AG04450 (cell line): ENCODE measurements at regions of chr14 and their contacts with region 1.

Region 1: DNA sequence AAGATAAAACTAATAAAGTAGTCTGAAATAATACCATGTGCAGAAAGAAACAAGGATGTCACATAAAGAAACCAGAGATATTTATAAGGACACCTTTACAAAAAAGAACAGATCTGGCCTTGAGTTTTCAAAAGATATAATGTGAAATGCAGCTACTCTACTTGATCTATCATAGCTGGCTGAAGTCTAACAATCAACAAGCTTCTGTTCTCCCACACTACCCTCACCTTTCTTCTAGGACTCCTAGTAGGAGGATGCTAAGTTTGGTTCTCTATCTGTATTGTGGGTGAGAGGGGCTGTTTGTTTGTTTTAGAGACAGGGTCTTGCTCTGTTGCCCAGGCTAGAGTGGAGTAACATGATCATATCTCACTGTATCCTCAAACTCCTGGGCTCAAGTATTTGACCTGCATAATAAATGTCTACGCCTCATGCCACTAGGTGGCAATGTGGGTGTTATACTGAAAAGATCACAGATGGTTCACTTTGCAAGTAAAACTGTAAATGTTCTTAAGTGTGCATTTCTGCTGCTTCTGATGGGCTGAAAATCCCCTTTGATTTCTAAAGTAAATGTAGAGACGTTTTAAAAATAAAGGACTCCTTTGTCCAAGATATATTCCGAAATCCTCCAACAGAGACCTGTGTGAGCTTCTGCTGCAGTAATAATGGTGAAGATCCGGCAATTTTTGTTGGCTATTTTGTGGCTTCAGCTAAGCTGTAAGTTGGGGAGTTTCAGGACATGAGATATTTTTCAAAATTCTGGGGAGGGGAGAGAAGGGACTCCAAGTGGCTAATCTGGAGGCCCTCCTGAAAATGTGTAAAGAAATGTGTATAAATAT is 269.3 kb downstream of the DAD1 start:
- DNase-seq: no peak
- H3K4me3 ChIP-seq: no peak overlapping the region
- H3K27ac ChIP-seq: no peak overlapping the region
- H3K27me3 ChIP-seq: peaks cover 13% of the 10 kb centered on the region
- CTCF ChIP-seq: peak; percentile 74

Region 2: DNA sequence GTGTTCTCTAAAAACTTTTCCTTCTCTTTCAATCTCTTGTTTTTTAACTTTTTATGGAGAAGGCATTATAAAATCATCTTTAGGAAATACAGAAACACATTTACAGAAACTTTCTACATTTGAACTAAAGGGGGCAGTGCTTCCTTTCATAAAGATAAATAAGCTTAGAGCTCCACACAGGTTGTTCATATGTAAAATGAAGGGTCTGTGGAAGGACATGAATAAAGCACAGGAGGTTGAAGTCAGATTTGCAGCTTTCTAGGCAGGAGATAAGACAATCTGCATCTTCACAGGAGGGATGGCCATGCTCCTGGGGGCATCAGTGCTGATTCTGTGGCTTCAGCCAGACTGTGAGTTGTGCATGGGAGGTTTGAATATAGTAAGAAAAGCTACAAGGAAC is 156.7 kb before region 1 on chr14:
- CTCF ChIA-PET with region 1: interaction called, 16 read pairs
- POLR2A ChIA-PET with region 1: no interaction called
- DNase-seq: no peak
- H3K4me3 ChIP-seq: no peak overlapping the region
- H3K27ac ChIP-seq: no peak overlapping the region
- H3K27me3 ChIP-seq: peaks cover 2% of the 10 kb centered on the region
- CTCF ChIP-seq: peak; percentile 60

Region 3: DNA sequence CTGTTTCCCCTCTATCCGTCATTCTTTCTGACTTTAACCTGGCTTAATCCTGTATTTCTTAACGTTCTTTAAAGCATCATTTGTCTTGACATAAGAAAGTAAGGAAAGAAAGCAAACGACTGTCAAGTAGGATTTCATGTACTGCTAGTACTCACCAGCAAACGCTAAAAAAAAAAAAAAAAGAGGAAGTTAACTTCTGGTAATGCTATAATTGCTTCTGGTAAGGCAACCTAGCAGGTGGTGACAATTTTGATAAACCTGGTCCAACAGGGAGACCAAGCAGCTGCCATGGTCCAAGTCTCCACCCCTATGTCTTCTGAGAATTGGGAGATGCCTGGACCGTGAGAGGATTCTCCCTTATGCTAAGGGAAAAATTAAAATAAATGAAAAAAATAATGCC is 37.3 kb before region 1 on chr14:
- CTCF ChIA-PET with region 1: interaction called, 12 read pairs
- POLR2A ChIA-PET with region 1: no interaction called
- DNase-seq: no peak
- H3K4me3 ChIP-seq: no peak overlapping the region
- H3K27ac ChIP-seq: no peak overlapping the region
- H3K27me3 ChIP-seq: no peaks in the 10 kb centered on the region
- CTCF ChIP-seq: no peak

Region 4: DNA sequence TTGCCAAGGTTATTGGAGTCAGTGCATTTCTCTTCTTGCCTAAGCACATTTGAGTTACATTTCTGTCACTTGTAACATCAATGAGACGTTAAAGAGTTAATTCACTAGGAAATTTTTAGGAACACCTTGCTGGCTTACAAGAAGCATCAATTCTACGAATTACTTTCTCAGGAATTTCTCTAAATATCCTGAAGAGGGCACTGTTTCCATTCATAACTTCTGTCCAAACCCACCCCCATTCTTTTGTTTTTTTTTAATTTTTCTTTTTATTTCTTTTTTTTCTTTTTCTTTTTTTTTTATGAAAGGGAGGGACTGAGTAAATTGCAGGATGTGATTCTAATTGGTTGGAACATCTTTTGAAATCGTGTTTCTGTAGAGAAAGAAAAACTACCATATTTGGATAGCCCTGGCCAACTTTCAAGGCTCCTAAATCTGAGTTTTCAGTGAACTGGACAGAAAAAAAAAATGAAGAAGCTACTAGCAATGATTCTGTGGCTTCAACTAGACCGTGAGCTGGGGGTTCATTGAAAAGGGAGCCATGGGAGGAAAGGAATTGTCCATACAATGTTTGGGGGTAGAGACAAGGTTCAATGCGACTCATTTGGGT is 16.1 kb before region 1 on chr14:
- CTCF ChIA-PET with region 1: interaction called, 13 read pairs
- POLR2A ChIA-PET with region 1: no interaction called
- DNase-seq: no peak
- H3K4me3 ChIP-seq: no peak overlapping the region
- H3K27ac ChIP-seq: no peak overlapping the region
- H3K27me3 ChIP-seq: no peaks in the 10 kb centered on the region
- CTCF ChIP-seq: peak; percentile 59

Region 5: GRCh38 chr14:22375321-22375930 is 55.7 kb after region 1 on chr14:
- CTCF ChIA-PET with region 1: interaction called, 124 read pairs
- POLR2A ChIA-PET with region 1: no interaction called
- DNase-seq: peak; percentile 39
- H3K4me3 ChIP-seq: no peak overlapping the region
- H3K27ac ChIP-seq: no peak overlapping the region
- H3K27me3 ChIP-seq: peaks cover 15% of the 10 kb centered on the region
- CTCF ChIP-seq: peak; percentile 74

Region 6: DNA sequence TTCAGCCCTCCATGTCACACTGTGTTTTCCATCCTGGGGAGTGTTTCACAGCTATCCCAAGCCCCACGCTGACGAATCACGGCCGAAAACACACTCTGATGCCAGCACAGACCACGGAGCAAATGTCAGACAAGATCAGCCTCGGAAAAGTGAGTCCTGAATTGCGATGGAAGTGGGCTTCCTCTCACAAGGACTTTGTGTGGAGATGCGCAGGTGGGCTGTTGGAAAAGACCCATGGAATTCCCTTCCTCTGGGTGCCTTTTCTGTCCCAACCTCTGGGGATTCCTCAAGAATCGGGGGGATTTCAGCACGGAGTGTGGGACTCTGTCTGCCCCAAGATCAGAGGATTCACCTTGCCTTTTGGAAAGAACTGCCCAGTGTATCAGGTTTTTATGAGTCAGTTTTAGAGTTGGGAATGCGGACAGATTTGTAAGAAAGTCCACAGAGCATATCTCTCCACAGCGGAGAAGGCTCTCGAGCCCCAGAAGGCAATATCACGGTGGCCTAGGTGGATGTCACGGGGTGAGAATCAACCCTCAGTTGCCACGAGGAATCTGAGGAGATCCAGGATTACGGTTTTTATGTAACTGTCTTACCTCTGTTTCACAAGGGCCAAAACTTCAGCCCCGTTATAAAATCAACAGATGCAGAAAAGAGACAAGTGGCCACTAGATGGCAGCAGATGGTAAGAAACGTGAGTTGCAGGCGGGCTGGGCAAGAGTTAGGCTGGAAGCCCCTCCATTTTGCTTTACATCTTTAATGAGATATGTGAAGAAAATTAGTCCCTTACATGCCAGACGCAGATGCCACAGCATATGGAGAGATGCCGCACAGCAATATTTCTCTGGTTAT is 67.4 kb after region 1 on chr14:
- CTCF ChIA-PET with region 1: interaction called, 10 read pairs
- POLR2A ChIA-PET with region 1: no interaction called
- DNase-seq: peak; percentile 47
- H3K4me3 ChIP-seq: no peak overlapping the region
- H3K27ac ChIP-seq: no peak overlapping the region
- H3K27me3 ChIP-seq: peaks cover 5% of the 10 kb centered on the region
- CTCF ChIP-seq: peak; percentile 74

Region 7: DNA sequence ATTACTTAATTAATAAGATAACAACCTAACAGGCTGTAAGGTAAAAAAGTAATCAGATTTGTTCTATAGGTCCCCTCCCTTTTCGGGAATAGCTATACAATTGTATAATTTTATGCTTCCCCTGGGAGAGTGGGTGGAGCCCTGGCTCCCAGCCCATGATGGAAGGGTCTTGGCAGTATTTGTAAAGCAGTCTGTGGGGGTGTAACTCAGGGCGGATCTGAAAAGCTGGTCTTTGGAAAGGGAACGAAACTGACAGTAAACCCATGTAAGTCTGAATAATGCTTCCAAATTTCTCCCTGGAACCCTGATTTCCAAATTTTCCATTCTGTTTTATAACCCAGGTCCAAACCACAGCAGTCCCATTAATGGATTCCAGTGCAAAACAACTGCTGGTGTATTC is 158.9 kb after region 1 on chr14:
- CTCF ChIA-PET with region 1: no interaction called
- POLR2A ChIA-PET with region 1: no interaction called
- DNase-seq: no peak
- H3K4me3 ChIP-seq: no peak overlapping the region
- H3K27ac ChIP-seq: no peak overlapping the region
- H3K27me3 ChIP-seq: peaks cover 47% of the 10 kb centered on the region
- CTCF ChIP-seq: no peak